Spleen (tissue), 13 donors: ENCODE measurements at regions of chr15 and their contacts with region 1.

Region 1: DNA sequence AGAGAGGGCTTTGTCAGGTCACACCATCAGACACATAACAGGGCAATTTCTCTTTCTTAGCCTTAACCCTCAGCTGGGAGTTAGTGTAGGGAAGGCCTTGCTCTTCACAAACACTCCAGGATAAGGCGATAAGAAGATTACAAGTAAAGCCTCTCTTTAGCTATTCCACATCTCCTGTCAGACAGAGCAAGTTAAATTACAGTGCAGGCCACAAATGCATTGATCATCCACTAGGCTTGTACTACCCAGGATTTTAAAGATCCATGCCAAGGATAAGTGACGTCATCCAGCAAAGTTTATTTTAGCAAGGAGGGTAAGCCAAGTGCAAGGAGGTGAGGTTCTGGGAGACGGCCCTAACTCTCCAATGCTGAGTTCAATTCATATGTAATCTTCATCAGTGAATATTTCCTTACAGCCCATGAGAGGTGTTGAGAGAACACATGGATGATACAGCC is 890.6 kb upstream of the NR2F2 start:
- DNase-seq: no peak
- H3K4me3 ChIP-seq: no peak overlapping the region
- H3K27ac ChIP-seq: peak overlapping the region in 7 of 8 donors; percentile 10 to 73 (median 53)
- H3K4me1 ChIP-seq: no peaks in the 10 kb centered on the region
- H3K27me3 ChIP-seq: no peaks in the 10 kb centered on the region
- CTCF ChIP-seq: no peak
- POLR2A ChIP-seq: no peak

Region 2: GRCh38 chr15:95454403-95455262 is 14.7 kb after region 1 on chr15:
- intact Hi-C with region 1: loop called (anchors 2 kb)
- DNase-seq: no peak
- H3K4me3 ChIP-seq: no peak overlapping the region
- H3K27ac ChIP-seq: peak overlapping the region in 2 of 8 donors; percentile 0 to 12
- H3K4me1 ChIP-seq: peaks cover 0 to 15% (median 2%) of the 10 kb centered on the region in 6 donors
- H3K27me3 ChIP-seq: no peaks in the 10 kb centered on the region
- CTCF ChIP-seq: no peak
- POLR2A ChIP-seq: no peak

Region 3: GRCh38 chr15:95635666-95636065 is 195.7 kb after region 1 on chr15:
- intact Hi-C with region 1: no loop called
- DNase-seq: no peak
- H3K4me3 ChIP-seq: no peak overlapping the region
- H3K27ac ChIP-seq: no peak overlapping the region
- H3K4me1 ChIP-seq: no peaks in the 10 kb centered on the region
- H3K27me3 ChIP-seq: no peaks in the 10 kb centered on the region
- CTCF ChIP-seq: no peak
- POLR2A ChIP-seq: no peak